Transverse colon (tissue), 4 donors: ENCODE measurements at regions of chr14 and their contacts with region 1.

Region 1: GRCh38 chr14:33839193-33840076 is 111.4 kb downstream of the EGLN3 start:
- DNase-seq: peak; percentile 39
- H3K4me3 ChIP-seq: no peak overlapping the region
- H3K27ac ChIP-seq: no peak overlapping the region
- H3K4me1 ChIP-seq: peaks cover 0 to 21% (median 4%) of the 10 kb centered on the region in 4 donors
- H3K27me3 ChIP-seq: no peaks in the 10 kb centered on the region
- CTCF ChIP-seq: peak; percentile 79 to 82 (median 79)
- EP300 ChIP-seq: no peak
- POLR2A ChIP-seq: no peak

Region 2: DNA sequence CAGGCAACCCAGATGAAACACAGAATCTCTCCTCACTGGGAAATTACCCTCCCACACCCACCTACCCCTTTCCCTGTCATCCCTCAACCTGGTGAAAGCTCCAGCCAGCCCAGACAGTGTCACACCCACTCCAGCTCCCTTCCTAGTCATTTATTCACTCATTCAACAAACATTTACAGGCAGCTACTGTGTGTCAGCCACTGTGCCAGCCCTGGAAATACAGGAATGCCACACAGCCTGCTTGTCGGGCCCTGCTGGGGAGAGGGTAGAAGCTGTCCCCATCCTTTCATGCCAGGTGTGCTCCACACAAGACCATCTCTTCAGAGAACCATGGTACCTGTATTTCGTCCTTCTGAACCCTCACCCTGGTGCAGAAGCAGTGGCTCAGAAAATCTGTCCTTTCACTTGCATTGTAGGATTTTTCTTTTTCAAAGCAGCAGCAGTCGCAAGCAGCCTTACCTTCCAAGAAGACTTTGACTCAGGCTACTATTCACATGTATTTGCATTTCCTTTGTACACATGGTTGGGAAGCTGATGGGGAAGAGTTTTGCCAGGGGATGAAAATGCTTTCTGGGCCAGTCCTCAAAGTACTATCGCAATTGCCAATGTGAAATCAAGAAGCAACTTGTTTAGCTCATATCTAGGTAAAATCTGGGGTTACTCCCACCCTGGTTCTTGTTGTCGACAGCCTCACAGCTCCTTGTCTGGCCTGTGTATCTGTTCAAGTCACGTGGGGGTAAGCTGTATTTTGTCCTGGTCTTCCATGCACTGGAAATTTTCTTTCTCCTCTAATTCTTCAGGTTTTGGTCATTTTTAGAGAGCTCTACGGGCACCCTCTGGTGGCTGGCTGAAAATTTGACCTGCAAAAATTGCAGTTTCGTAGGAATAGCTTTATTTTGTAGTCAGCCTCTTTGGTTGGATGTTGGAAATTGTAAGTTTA is 258.9 kb after region 1 on chr14:
- in situ Hi-C with region 1: loop called (anchors 10 to 25 kb)
- intact Hi-C with region 1: loop called (anchors 10 kb)
- DNase-seq: peak; percentile 24
- H3K4me3 ChIP-seq: no peak overlapping the region
- H3K27ac ChIP-seq: no peak overlapping the region
- H3K4me1 ChIP-seq: peaks cover 0 to 19% (median 8%) of the 10 kb centered on the region in 4 donors
- H3K27me3 ChIP-seq: no peaks in the 10 kb centered on the region
- CTCF ChIP-seq: peak; percentile 40 to 53 (median 52)
- EP300 ChIP-seq: no peak
- POLR2A ChIP-seq: no peak

Region 3: DNA sequence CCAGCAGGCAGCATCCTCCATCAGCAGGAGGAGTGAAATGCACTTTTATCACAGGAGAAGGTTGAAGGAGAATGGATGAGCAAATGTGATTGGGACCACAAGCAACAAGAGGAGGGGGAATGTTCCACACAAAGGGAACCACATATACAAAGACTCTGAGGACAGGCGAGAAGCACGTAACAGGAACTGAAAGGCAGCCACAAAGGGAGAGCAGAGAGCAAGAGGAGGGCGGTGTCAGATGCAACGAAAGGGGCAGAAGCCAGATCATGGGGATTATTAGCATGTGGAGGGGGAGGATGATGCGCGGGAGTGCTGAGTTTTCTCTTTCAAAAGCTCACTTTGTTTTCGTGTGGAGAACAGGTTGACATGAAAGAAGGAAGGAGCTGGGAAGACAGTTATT is 381.5 kb after region 1 on chr14:
- in situ Hi-C with region 1: loop called in 1 of 4 experiments (anchors 25 kb)
- intact Hi-C with region 1: loop called (anchors 5 kb)
- DNase-seq: no peak
- H3K4me3 ChIP-seq: no peak overlapping the region
- H3K27ac ChIP-seq: peak overlapping the region in 1 of 4 donors; percentile 47
- H3K4me1 ChIP-seq: peaks cover 0 to 36% (median 12%) of the 10 kb centered on the region in 4 donors
- H3K27me3 ChIP-seq: no peaks in the 10 kb centered on the region
- CTCF ChIP-seq: no peak
- EP300 ChIP-seq: no peak
- POLR2A ChIP-seq: no peak

Region 4: DNA sequence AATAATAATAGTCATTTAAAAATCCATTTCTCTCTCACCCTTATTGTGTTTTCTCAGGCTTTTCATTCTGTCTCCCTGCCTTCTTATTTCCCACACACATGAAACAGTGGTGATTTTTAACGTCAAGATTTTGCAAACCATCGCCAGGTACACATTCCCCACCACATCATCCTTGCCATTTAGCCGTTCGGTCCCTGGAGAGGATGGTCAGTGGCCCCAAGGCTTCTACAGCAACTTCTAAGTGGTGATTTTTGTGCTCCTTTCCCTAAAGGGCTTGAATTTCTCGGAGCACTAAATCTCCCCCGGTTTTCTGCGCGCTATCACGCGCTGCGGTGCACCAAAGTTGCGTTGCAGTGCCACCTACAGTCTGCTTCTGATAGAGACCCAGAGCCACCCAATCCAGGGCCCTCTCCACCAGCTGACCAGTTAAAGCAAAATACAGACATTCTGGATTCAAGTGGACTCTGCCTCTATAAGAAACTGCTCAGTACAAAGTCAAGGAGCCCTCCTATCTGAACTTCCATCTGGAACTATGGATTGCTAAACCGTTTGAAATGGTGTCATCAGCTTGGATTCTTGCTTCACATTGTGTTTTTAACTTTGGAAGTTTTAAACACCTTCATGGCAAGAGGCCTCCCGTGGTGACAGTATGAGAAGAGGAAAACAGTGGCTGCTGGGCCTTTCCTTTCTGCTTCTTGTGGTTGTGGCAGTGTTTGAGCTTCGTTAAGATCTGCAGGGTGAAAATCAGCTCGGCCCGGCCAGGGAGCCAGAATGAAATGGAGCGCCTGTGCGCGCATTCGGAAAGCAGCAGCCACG is 388.6 kb after region 1 on chr14:
- in situ Hi-C with region 1: loop called in 2 of 4 experiments (anchors 10 to 25 kb)
- intact Hi-C with region 1: loop called (anchors 5 kb)
- DNase-seq: peak; percentile 66
- H3K4me3 ChIP-seq: no peak overlapping the region
- H3K27ac ChIP-seq: peak overlapping the region; percentile 2 to 62 (median 50)
- H3K4me1 ChIP-seq: peaks cover 7 to 45% (median 31%) of the 10 kb centered on the region in 4 donors
- H3K27me3 ChIP-seq: no peaks in the 10 kb centered on the region
- CTCF ChIP-seq: peak; percentile 73 to 87 (median 82)
- EP300 ChIP-seq: no peak
- POLR2A ChIP-seq: no peak

Region 5: GRCh38 chr14:34237081-34237480 is 397.6 kb after region 1 on chr14:
- in situ Hi-C with region 1: loop called in 2 of 4 experiments (anchors 10 to 25 kb)
- intact Hi-C with region 1: no loop called
- DNase-seq: no peak
- H3K4me3 ChIP-seq: no peak overlapping the region
- H3K27ac ChIP-seq: peak overlapping the region in 2 of 4 donors; percentile 28 to 52
- H3K4me1 ChIP-seq: peaks cover 0 to 31% (median 16%) of the 10 kb centered on the region in 4 donors
- H3K27me3 ChIP-seq: no peaks in the 10 kb centered on the region
- CTCF ChIP-seq: no peak
- EP300 ChIP-seq: no peak
- POLR2A ChIP-seq: no peak

Region 6: GRCh38 chr14:34322940-34323418 is 483.5 kb after region 1 on chr14:
- in situ Hi-C with region 1: loop called in 3 of 4 experiments (anchors 10 to 25 kb)
- intact Hi-C with region 1: no loop called
- DNase-seq: peak; percentile 74
- H3K4me3 ChIP-seq: no peak overlapping the region
- H3K27ac ChIP-seq: no peak overlapping the region
- H3K4me1 ChIP-seq: peaks cover 0 to 24% (median 15%) of the 10 kb centered on the region in 4 donors
- H3K27me3 ChIP-seq: no peaks in the 10 kb centered on the region
- CTCF ChIP-seq: peak; percentile 68 to 74 (median 71)
- EP300 ChIP-seq: no peak
- POLR2A ChIP-seq: no peak